Gastrocnemius medialis (tissue), 4 donors: ENCODE measurements at regions of chr3 and their contacts with region 1.

Region 1: GRCh38 chr3:15339786-15340215 is 7.4 kb upstream of the SH3BP5 start:
- DNase-seq: no peak
- ATAC-seq: peak; percentile 55 to 64
- H3K4me3 ChIP-seq: no peak overlapping the region
- H3K27ac ChIP-seq: no peak overlapping the region
- H3K4me1 ChIP-seq: peaks cover 3 to 7% of the 10 kb centered on the region in 2 donors
- H3K27me3 ChIP-seq: no peaks in the 10 kb centered on the region
- CTCF ChIP-seq: no peak
- POLR2A ChIP-seq: no peak

Region 2: GRCh38 chr3:14947886-14948555 is 391.8 kb before region 1 on chr3:
- in situ Hi-C with region 1: no loop called
- intact Hi-C with region 1: no loop called
- DNase-seq: peak; percentile 97
- ATAC-seq: peak; percentile 86 to 88
- H3K4me3 ChIP-seq: peak overlapping the region; percentile 66 to 98 (median 80)
- H3K27ac ChIP-seq: peak overlapping the region; percentile 96 to 99 (median 99)
- H3K4me1 ChIP-seq: peaks cover 34 to 42% of the 10 kb centered on the region in 2 donors
- H3K27me3 ChIP-seq: no peaks in the 10 kb centered on the region
- CTCF ChIP-seq: peak in 1 of 5 experiments; percentile 16
- POLR2A ChIP-seq: peak in 1 of 2 donors; percentile 1

Region 3: DNA sequence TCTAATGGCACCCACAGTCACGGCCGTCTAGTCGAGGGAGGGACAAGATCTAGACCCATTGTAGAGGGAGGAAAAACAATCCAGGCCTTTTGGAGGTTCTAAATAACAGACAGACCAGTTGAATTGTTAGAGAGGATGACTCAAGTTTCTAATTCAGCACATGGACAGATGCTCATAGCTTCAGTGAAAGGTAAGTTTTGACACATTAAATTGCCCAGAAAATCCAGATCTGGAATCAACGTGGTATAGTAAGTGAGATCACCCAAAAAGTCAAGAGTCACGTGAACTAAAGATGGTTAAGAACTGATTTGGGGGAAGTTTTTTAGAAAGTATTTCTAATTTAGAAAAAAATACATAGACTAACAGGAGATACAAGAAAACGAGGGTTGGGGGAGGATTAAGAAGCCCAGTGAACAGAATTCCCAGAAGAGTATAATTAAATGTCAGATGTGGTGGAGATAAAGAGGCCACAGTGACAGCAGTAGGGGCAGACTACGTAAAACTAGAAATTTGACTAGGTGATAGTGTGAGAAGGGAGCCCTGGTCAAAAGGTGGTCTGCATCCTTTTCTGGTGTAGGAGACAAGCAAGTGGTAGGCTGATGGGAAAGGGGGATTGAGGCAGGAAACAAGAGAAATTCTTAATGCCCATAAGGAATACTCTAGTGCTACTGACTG is 86.6 kb before region 1 on chr3:
- in situ Hi-C with region 1: no loop called
- intact Hi-C with region 1: no loop called
- DNase-seq: no peak
- ATAC-seq: no peak
- H3K4me3 ChIP-seq: no peak overlapping the region
- H3K27ac ChIP-seq: no peak overlapping the region
- H3K4me1 ChIP-seq: peaks cover 5 to 7% of the 10 kb centered on the region in 2 donors
- H3K27me3 ChIP-seq: no peaks in the 10 kb centered on the region
- CTCF ChIP-seq: no peak
- POLR2A ChIP-seq: no peak

Region 4: DNA sequence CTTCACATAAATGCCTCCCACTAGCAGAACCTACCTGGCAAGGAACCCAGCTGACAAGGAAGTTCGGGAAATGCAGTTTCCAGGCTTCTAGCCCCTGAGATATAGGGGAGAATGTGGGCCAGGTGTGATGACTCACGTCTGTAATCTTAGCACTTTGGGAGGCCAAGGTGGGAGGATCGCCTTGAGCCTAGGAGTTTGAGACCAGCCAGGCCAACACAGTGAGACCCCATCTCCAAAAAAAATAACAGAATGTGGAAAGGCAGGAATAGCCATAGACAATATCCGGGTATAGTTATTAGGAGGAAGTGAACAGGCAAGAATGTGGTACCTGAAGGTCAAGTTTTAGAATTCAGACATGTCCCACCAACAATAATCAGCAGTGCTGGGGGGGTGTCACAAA is 33.1 kb after region 1 on chr3:
- in situ Hi-C with region 1: loop called in 2 of 4 experiments (anchors 5 kb)
- intact Hi-C with region 1: loop called (anchors 2 kb)
- DNase-seq: no peak
- ATAC-seq: no peak
- H3K4me3 ChIP-seq: no peak overlapping the region
- H3K27ac ChIP-seq: no peak overlapping the region
- H3K4me1 ChIP-seq: peaks cover 0 to 3% of the 10 kb centered on the region in 2 donors
- H3K27me3 ChIP-seq: no peaks in the 10 kb centered on the region
- CTCF ChIP-seq: no peak
- POLR2A ChIP-seq: no peak

Region 5: DNA sequence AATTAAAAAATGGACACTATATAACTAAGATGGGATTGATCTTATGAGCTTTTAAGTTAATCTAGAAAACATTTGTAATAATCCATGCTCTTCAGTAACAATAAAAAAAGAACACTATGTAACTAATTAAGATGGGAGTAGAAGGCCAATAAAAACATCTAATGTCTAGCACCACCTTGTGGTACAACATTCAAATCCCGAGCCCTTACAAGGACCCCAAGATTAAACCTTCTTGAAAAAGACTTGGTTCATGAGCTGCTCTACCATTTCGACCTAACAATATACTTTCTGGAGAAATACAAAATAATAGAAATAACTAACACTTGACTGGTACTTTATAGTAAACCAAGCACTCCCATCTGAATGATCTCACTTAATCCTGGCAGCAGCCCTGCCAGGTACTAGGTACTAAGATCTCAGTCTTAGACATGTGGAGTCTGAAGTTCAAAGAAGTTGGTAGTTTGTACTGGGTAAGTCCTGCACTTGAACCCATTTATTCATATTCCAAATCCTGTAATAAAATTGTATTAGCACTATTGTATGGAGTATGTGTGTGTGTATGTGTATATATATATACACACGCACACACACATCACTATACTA is 65.7 kb after region 1 on chr3:
- in situ Hi-C with region 1: no loop called
- intact Hi-C with region 1: no loop called
- DNase-seq: no peak
- ATAC-seq: peak; percentile 49 to 70
- H3K4me3 ChIP-seq: no peak overlapping the region
- H3K27ac ChIP-seq: no peak overlapping the region
- H3K4me1 ChIP-seq: no peaks in the 10 kb centered on the region
- H3K27me3 ChIP-seq: no peaks in the 10 kb centered on the region
- CTCF ChIP-seq: peak; percentile 29 to 66 (median 44)
- POLR2A ChIP-seq: no peak

Region 6: GRCh38 chr3:16349986-16350596 is 1010.3 kb after region 1 on chr3:
- in situ Hi-C with region 1: no loop called
- intact Hi-C with region 1: no loop called
- DNase-seq: no peak
- ATAC-seq: no peak
- H3K4me3 ChIP-seq: no peak overlapping the region
- H3K27ac ChIP-seq: no peak overlapping the region
- H3K4me1 ChIP-seq: peaks cover 12 to 38% of the 10 kb centered on the region in 2 donors
- H3K27me3 ChIP-seq: no peaks in the 10 kb centered on the region
- CTCF ChIP-seq: no peak
- POLR2A ChIP-seq: no peak